ENCODE measurements at regions of chr17 and their contacts with region 1.

Region 1: GRCh38 chr17:70168977-70169708 is at the start of gene KCNJ2:
- DNase-seq: peak; percentile 96
- total RNA-seq, gene KCNJ2: 33.5 TPM

Region 2: GRCh38 chr17:69609473-69610305 is 559.5 kb before region 1 on chr17:
- intact Hi-C with region 1: loop called (anchors 2 kb)
- DNase-seq: no peak

Region 3: GRCh38 chr17:70307430-70308225 is 138.5 kb after region 1 on chr17:
- intact Hi-C with region 1: loop called (anchors 5 kb)
- DNase-seq: no peak

Region 4: DNA sequence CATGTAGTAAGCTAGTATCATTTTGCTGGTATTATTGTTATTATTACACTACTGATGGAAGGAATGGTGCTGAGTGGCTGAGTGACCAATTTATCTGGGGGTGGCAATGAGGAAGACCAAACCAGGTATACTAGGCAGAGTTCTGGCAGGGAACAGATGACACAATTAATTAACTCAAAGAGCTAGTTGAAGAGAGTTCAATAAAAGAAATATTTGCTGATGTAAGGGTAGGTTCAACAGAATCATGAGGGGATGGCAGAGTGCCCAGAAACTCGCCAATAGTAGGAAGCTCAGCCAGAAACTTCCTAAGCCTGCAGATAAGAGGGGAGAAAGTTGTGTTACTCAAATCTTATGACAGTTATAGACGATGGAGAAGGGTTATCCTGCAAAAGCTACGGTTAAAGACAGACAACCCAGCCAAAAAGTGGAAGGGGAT is 352.7 kb after region 1 on chr17:
- intact Hi-C with region 1: loop called (anchors 2 kb)
- DNase-seq: no peak

Region 5: GRCh38 chr17:70552230-70552981 is 383.3 kb after region 1 on chr17:
- intact Hi-C with region 1: loop called (anchors 5 kb)
- DNase-seq: no peak

Region 6: GRCh38 chr17:70588003-70588402 is 418.9 kb after region 1 on chr17:
- intact Hi-C with region 1: no loop called
- DNase-seq: no peak

Region 7: DNA sequence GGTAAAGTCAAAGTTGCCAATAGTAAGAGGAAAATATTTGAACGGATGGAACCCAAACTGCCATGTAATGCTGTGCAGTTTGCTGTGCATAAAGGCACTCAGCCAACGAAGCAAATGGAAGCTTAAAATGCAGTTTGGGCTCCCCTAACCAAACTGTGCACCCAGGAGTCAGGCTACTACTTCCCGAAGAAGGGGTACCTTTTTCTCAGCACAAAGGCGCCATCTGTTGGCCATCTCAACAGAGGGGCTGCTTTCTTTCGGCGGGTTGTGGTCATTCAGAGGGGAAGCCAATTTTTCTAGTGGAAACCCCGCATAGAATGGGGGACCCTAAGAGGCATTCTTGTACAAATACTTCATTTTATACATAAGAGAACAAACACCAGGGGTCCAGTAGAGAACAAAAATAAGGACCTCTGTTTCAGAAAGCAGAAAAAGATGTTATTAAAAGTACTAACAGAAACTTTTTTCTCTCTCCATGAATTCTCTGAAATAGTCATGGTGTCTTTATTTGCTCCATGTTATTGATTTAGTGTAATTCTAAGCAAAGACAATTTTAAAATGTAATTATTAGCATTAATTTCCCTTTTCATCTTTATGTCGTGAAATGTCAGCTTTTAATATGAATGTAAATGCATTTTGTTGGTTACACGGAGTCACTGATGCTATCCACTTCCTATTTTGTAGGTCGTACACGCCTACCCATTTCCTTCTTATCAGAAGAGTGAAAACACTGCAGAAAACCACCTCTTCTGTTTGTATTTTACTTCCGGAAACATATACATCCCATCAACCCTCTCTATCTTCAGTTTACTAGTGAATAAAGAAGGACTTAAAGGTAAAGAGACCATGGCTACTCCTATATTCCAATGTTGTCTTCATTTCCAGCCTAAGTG is 453.5 kb after region 1 on chr17:
- intact Hi-C with region 1: loop called (anchors 2 kb)
- DNase-seq: no peak

Measured in cardiac septum (tissue), 1 donor.